Activated CD4-positive, alpha-beta memory T cell treated with anti-CD3 and anti-CD28 coated beads, Interleukin-2, amount 10 ng/mL, durations not matched to agents 7 days and 5 days (primary cell): ENCODE measurements at regions of chr17 and their contacts with region 1.

Region 1: DNA sequence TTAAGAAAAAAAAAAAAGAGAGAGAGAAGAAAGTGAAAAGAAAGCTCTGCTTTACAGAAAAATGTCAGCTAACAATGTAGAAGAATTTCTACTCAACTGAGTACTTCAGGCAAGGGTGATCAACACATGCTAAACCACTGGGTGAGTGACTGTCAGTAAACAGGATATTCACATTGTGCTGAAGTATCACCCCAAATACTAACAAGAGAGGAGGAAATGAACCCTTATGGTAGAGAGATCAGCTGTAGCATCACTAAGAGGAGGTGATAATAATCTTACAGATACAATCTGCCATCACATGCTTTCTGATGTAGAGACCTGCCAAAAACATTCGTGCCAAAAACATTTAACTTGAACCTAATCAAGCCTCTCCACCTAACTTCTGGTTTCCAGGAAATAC is 30.7 kb upstream of the ICAM2 start:
- DNase-seq: peak; percentile 34
- H3K4me3 Mint-ChIP-seq: peak overlapping the region; percentile 18
- H3K27ac Mint-ChIP-seq: peak overlapping the region; percentile 90
- H3K4me1 Mint-ChIP-seq: peaks cover 57% of the 10 kb centered on the region
- H3K27me3 Mint-ChIP-seq: no peaks in the 10 kb centered on the region

Region 2: DNA sequence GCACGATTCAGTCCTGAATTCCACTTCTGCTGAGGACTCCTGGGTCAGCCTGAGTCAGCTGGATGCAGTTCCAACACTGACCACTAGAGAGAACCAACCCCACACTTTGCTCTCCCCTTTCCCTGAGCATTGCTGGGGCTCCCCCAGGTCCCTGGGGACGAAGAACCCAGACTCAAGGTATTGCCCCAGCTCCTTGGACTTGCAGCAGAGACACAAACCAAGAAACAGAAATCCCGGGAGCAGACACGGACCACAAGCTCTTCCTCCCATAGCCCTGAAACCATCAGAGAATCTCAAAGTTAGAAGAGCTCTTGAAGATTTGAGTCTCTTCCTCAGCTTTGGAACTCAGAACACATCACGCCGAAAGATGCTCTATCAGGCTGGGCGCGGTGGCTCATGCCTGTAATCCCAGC is 131.8 kb before region 1 on chr17:
- CTCF ChIA-PET with region 1: interaction called, 13 read pairs
- POLR2A ChIA-PET with region 1: no interaction called
- DNase-seq: peak; percentile 79
- H3K4me3 Mint-ChIP-seq: no peak overlapping the region
- H3K27ac Mint-ChIP-seq: no peak overlapping the region
- H3K4me1 Mint-ChIP-seq: peaks cover 8% of the 10 kb centered on the region
- H3K27me3 Mint-ChIP-seq: peaks cover 19% of the 10 kb centered on the region

Region 3: GRCh38 chr17:64063766-64064224 is 12.6 kb after region 1 on chr17:
- CTCF ChIA-PET with region 1: interaction called, 8 read pairs
- POLR2A ChIA-PET with region 1: interaction called, 17 read pairs
- DNase-seq: peak; percentile 66
- H3K4me3 Mint-ChIP-seq: peak overlapping the region; percentile 89
- H3K27ac Mint-ChIP-seq: peak overlapping the region; percentile 96
- H3K4me1 Mint-ChIP-seq: peaks cover 99% of the 10 kb centered on the region
- H3K27me3 Mint-ChIP-seq: no peaks in the 10 kb centered on the region

Region 4: GRCh38 chr17:64081802-64082799 is 30.9 kb after region 1 on chr17:
- CTCF ChIA-PET with region 1: interaction called, 4 read pairs
- POLR2A ChIA-PET with region 1: interaction called, 27 read pairs
- DNase-seq: peak; percentile 84
- H3K4me3 Mint-ChIP-seq: peak overlapping the region; percentile 54
- H3K27ac Mint-ChIP-seq: no peak overlapping the region
- H3K4me1 Mint-ChIP-seq: peaks cover 31% of the 10 kb centered on the region
- H3K27me3 Mint-ChIP-seq: no peaks in the 10 kb centered on the region

Region 5: GRCh38 chr17:64117981-64118979 is 67.1 kb after region 1 on chr17:
- CTCF ChIA-PET with region 1: interaction called, 3 read pairs
- POLR2A ChIA-PET with region 1: interaction called, 12 read pairs
- DNase-seq: no peak
- H3K4me3 Mint-ChIP-seq: no peak overlapping the region
- H3K27ac Mint-ChIP-seq: no peak overlapping the region
- H3K4me1 Mint-ChIP-seq: peaks cover 80% of the 10 kb centered on the region
- H3K27me3 Mint-ChIP-seq: no peaks in the 10 kb centered on the region

Region 6: GRCh38 chr17:64580384-64581315 is 529.5 kb after region 1 on chr17:
- CTCF ChIA-PET with region 1: no interaction called
- POLR2A ChIA-PET with region 1: no interaction called
- DNase-seq: no peak
- H3K4me3 Mint-ChIP-seq: no peak overlapping the region
- H3K27ac Mint-ChIP-seq: peak overlapping the region; percentile 36
- H3K4me1 Mint-ChIP-seq: peaks cover 12% of the 10 kb centered on the region
- H3K27me3 Mint-ChIP-seq: no peaks in the 10 kb centered on the region